SK-N-SH (cell line): ENCODE measurements at regions of chr2 and their contacts with region 1.

Region 1: DNA sequence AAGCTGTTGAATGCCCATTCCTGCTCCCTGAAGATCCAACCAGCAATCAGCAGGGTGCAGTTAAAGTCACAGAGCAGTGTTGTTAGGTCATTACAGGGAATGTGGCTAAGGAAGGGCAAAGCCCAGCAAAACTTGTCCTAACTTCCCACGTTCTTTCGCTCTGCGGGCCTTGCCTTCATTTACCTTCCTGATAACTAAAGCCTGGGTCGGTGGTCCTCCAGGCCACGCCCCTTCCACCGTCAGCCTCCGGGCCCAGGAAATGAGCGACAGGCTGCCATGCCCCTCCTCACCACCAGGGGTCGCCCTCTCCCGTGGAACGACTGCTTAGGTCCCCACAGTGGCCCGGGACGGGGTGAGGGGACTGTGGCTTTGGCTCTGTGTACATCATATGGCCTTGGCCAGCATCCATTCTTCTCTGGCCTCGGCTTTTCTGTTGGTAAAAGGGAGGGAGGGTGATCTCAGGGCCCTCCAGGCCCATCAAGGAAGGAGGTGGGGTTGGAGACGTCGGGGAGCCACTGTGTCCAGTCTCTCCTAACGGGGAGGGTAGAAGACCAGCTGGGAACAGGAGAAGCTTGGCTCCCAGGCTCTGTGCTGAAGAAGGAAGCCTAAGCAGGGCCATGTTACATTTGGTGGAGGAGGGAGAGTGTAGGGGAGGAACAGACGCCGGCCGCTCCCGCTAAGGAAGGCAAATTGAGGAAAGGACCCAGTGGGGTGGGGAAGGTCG is 2.2 kb downstream of the SH2D6 start:
- DNase-seq: peak; percentile 92
- H3K4me3 ChIP-seq: peak overlapping the region in 1 of 2 experiments; percentile 31; a peak in 1 of 4 replicates
- H3K27ac ChIP-seq: peak overlapping the region in 1 of 2 experiments; percentile 60; a peak in 2 of 4 replicates
- H3K4me1 ChIP-seq: peaks cover 9 to 23% of the 10 kb centered on the region in 2 experiments; a peak in 1 of 4 replicates
- H3K27me3 ChIP-seq: no peaks in the 10 kb centered on the region
- CTCF ChIP-seq: peak; percentile 99
- EP300 ChIP-seq: no peak
- RAD21 ChIP-seq: peak; percentile 99

Region 2: GRCh38 chr2:85288244-85288725 is 132.4 kb before region 1 on chr2:
- CTCF ChIA-PET with region 1: no interaction called
- POLR2A ChIA-PET with region 1: no interaction called
- DNase-seq: no peak
- H3K4me3 ChIP-seq: no peak overlapping the region
- H3K27ac ChIP-seq: no peak overlapping the region
- H3K4me1 ChIP-seq: peaks cover 3 to 9% of the 10 kb centered on the region in 2 experiments; a peak in 2 of 4 replicates
- H3K27me3 ChIP-seq: no peaks in the 10 kb centered on the region
- CTCF ChIP-seq: no peak
- EP300 ChIP-seq: no peak
- RAD21 ChIP-seq: no peak

Region 3: DNA sequence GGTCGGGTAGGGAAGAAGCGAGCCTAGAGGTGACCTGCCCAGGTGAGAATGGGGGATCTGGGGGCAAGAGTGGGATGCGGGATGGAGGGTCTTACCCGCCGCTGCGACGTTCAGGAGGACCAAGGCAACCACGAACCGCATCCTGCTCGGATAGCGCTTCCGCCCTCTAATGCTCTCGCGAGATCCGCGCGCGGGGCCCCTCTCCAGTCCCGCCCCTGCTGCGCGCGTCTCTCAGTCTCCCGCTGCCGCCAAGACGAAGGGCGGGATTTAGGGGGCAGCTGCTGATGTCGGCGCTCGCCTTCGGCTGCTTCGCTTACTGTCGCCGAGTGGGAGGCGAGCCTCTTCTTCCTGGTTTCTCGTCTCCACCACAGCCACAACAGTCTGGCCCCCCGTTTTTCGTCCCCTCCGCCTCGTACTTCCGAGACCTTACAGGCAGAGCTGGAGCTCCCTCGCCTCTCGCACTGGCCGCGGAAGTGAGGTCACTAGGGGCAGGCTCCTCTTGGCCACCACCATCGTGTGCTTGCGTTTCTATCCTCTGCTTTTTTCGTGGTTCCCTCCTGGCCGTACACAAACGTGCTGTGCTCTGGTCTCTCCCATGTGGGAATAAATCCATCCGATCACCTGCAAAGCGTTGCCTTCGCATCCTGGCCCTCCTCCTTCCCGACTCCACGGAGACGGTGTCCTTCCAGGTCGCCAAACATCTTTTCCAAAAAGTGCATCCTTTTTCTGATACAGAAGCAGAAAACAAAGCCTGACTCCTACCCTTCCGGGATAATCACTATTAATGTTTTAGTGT is 92.7 kb before region 1 on chr2 and contains the start of gene TGOLN2:
- CTCF ChIA-PET with region 1: no interaction called
- POLR2A ChIA-PET with region 1: interaction called, 11 read pairs
- DNase-seq: peak; percentile 98
- H3K4me3 ChIP-seq: peak within 1 kb of the TSS; percentile 73 to 95
- H3K27ac ChIP-seq: peak within 1 kb of the TSS; percentile 88 to 97
- H3K4me1 ChIP-seq: peaks cover 7 to 24% of the 10 kb centered on the region in 2 experiments; a peak in 3 of 4 replicates
- H3K27me3 ChIP-seq: no peaks in the 10 kb centered on the region
- CTCF ChIP-seq: no peak
- EP300 ChIP-seq: 0 out of 4 replicates have a peak, but pooled peaks of 1 of the 2 experiments have one; percentile 1
- RAD21 ChIP-seq: no peak
- polyA plus RNA-seq, gene TGOLN2: 138 and 140 TPM in 2 replicates

Region 4: DNA sequence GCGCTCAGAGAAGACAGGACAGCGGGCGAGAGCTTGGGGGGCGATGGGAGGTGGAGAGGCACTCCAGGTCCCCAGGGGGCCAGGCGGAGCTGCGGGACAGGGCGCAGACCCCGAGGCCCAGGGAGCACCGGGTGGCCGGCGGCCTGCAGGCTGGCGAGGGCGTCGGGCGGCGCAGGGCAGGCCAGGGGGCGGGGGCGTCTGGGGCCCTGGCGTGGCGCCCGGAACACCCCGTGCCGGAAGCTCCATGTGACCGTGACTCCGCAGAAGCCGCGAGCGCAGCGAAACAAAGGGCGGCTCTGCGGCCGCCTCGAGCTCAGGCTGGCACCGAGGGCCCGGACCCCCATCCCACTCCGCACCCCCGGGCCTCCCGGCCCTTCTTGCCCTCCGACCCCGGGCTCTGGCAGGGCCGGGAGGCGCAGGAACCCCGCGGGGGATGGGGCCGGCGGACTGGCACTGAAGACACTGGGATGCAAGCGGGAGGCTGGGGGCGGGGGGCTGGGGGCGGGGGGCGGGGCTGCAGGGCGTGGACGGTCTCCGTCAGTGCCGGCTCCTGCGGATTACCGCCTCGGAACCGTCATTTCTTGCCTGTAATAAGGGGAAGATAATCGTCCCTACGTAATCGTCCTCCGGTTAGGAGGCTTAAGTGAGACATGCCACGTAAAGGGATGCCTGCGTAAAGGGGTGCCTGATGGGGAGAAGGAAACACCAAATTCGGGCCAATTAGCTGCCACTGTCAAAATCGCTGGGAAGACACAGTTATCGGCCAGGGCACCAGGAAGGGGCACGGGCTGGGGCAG is 17.0 kb after region 1 on chr2:
- CTCF ChIA-PET with region 1: interaction called, 24 read pairs
- POLR2A ChIA-PET with region 1: interaction called, 8 read pairs
- DNase-seq: peak; percentile 97
- H3K4me3 ChIP-seq: peak overlapping the region in 1 of 2 experiments; percentile 42; a peak in 2 of 4 replicates
- H3K27ac ChIP-seq: peak overlapping the region; percentile 58 to 90
- H3K4me1 ChIP-seq: peaks cover 14 to 63% of the 10 kb centered on the region in 2 experiments; a peak in 3 of 4 replicates
- H3K27me3 ChIP-seq: no peaks in the 10 kb centered on the region
- CTCF ChIP-seq: no peak
- EP300 ChIP-seq: peak; percentile 19 to 51; a peak in 2 of 4 replicates
- RAD21 ChIP-seq: no peak

Region 5: GRCh38 chr2:85524336-85524933 is 103.7 kb after region 1 on chr2:
- CTCF ChIA-PET with region 1: interaction called, 26 read pairs
- POLR2A ChIA-PET with region 1: interaction called, 12 read pairs
- DNase-seq: peak; percentile 75
- H3K4me3 ChIP-seq: no peak overlapping the region
- H3K27ac ChIP-seq: peak overlapping the region; percentile 40 to 98; a peak in 3 of 4 replicates
- H3K4me1 ChIP-seq: peaks cover 9 to 30% of the 10 kb centered on the region in 2 experiments; a peak in 3 of 4 replicates
- H3K27me3 ChIP-seq: no peaks in the 10 kb centered on the region; the same call in 1 of the 2 replicates
- CTCF ChIP-seq: no peak
- EP300 ChIP-seq: peak in 1 of 2 experiments; percentile 82; a peak in 2 of 4 replicates
- RAD21 ChIP-seq: peak; percentile 43

Region 6: DNA sequence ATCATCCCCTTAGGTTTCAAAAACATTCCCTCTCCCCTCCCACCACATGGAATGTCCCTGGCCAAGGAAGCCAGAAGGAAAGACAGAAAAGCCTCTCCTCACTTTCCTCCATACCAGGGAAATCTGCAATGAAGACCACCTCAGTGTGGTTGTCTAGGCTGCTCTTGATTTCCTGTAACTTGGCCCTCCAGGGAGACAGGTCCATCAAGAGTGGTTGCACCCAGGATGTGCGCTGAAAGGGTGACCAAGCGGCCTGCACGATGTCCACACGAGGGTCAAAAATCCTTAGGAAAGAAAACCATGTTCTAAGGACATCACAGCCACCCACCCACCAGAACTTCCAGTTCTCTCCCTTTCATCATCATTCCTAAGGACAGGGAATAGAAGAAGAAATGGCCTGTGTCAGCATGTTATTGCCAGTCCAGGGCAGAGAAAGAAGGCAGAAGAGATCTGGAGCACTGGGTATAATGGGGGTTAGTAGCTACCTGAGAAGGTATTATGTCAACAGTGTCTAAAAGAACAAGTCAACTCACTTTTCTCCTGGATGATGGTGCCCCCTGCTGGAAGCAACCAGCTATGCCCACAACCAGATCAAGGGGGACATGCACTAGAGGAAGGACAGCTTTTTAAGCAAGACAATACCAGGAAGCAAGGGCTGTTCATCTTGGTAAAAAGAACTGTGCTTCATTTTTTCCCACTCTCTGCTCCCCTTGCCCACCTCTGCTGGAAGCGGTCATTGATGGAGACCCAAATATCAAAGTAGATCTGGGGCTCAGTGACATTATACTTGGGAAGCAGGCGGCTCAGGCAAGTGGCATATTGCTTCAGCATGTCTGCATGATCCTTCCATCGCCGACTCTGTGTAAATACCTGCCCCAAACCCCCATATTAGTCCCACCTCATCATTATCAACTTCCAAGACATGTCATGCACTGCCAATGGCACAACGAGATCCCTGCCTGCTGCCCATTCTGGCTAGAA is 131.3 kb after region 1 on chr2:
- CTCF ChIA-PET with region 1: interaction called, 364 read pairs
- POLR2A ChIA-PET with region 1: interaction called, 87 read pairs
- DNase-seq: peak; percentile 73
- H3K4me3 ChIP-seq: no peak overlapping the region
- H3K27ac ChIP-seq: no peak overlapping the region
- H3K4me1 ChIP-seq: peaks cover 0 to 13% of the 10 kb centered on the region in 2 experiments; a peak in 2 of 4 replicates
- H3K27me3 ChIP-seq: no peaks in the 10 kb centered on the region
- CTCF ChIP-seq: peak; percentile 94
- EP300 ChIP-seq: no peak
- RAD21 ChIP-seq: peak; percentile 97